ENCODE measurements at regions of chr3 and their contacts with region 1.

Region 1: DNA sequence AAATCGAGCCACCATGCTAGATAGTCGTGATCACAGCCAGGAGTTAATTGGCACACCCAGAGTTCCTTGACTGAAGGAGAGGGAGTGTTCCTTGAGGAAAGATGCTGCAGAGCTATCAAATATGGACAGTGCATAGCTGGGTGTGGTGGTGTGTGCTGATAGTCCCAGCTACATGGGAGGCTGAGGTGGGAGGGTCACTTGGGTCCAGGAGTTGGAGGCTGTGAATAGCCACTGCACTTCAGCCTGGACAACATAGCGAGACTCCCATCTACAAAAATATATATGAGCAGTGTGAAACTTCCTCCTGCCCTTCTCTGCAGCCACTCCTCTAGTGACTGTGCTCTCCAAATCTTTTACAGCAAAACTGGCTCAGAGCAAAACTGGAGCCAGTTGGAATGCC is 10.0 kb upstream of the USP13 start:
- DNase-seq: no peak
- ATAC-seq: no peak
- H3K4me3 ChIP-seq: no peak overlapping the region
- H3K27ac ChIP-seq: peak overlapping the region; percentile 88
- H3K4me1 ChIP-seq: peaks cover 32% of the 10 kb centered on the region
- H3K27me3 ChIP-seq: no peaks in the 10 kb centered on the region; a peak in 1 of 5 replicates
- CTCF ChIP-seq: no peak
- EP300 ChIP-seq: no peak
- POLR2A ChIP-seq: no peak
- RAD21 ChIP-seq: no peak

Region 2: GRCh38 chr3:179604321-179605078 is 38.4 kb before region 1 on chr3 and contains the starts of genes MRPL47 and NDUFB5:
- CTCF ChIA-PET with region 1: no interaction called
- POLR2A ChIA-PET with region 1: interaction called, 22 read pairs
- in situ Hi-C with region 1: no loop called
- intact Hi-C with region 1: loop called (anchors 2 kb)
- DNase-seq: peak; percentile 95
- ATAC-seq: peak; percentile 100
- H3K4me3 ChIP-seq: peak within 1 kb of the TSS; percentile 90 to 95 (median 91)
- H3K27ac ChIP-seq: peak within 1 kb of the TSS; percentile 86
- H3K4me1 ChIP-seq: peaks cover 18% of the 10 kb centered on the region
- H3K27me3 ChIP-seq: no peaks in the 10 kb centered on the region; a peak in 1 of 5 replicates
- CTCF ChIP-seq: no peak
- EP300 ChIP-seq: no peak
- POLR2A ChIP-seq: peak; percentile 82 to 89
- RAD21 ChIP-seq: no peak
- total RNA-seq, gene MRPL47: 83.8 and 120 TPM in 2 replicates
- total RNA-seq, gene NDUFB5: 120 and 154 TPM in 2 replicates

Region 3: GRCh38 chr3:179739816-179740594 is 97.1 kb after region 1 on chr3:
- CTCF ChIA-PET with region 1: no interaction called
- POLR2A ChIA-PET with region 1: interaction called, 10 read pairs
- in situ Hi-C with region 1: no loop called
- intact Hi-C with region 1: no loop called
- DNase-seq: peak; percentile 91
- ATAC-seq: peak; percentile 95
- H3K4me3 ChIP-seq: peak overlapping the region; percentile 17 to 59 (median 58); a peak in 5 of 6 replicates
- H3K27ac ChIP-seq: peak overlapping the region; percentile 78
- H3K4me1 ChIP-seq: peaks cover 97% of the 10 kb centered on the region
- H3K27me3 ChIP-seq: no peaks in the 10 kb centered on the region
- CTCF ChIP-seq: no peak
- EP300 ChIP-seq: peak; percentile 48 to 95; a peak in 3 of 4 replicates
- POLR2A ChIP-seq: peak in 1 of 2 experiments; percentile 29; a peak in 1 of 4 replicates
- RAD21 ChIP-seq: no peak

Region 4: GRCh38 chr3:179882292-179882691 is 239.4 kb after region 1 on chr3:
- CTCF ChIA-PET with region 1: no interaction called
- POLR2A ChIA-PET with region 1: no interaction called
- in situ Hi-C with region 1: no loop called
- intact Hi-C with region 1: no loop called
- DNase-seq: no peak
- ATAC-seq: no peak
- H3K4me3 ChIP-seq: no peak overlapping the region
- H3K27ac ChIP-seq: no peak overlapping the region
- H3K4me1 ChIP-seq: no peaks in the 10 kb centered on the region
- H3K27me3 ChIP-seq: no peaks in the 10 kb centered on the region
- CTCF ChIP-seq: no peak
- EP300 ChIP-seq: no peak
- POLR2A ChIP-seq: no peak
- RAD21 ChIP-seq: no peak

Measured in HepG2 (cell line).